ENCODE measurements at regions of chr2 and their contacts with region 1.

Region 1: DNA sequence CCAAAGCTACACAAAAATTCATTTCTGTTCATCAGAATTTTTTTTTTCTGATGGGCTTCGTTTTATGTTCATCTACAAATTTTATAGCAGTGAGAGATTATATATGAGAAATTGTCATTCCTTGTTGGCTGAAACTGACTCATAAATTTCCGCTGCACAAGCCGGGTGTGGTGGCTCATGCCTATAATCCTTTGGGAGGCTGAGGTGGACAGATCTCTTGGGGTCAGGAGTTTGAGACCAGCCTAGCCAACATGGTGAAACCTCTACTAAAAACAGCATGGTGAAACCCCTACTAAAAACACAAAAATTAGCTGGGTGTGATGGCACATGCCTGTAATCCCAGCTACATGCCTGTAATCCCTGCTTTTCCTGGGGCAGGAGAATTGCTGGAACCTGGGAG is 72.0 kb downstream of the PLEKHM3 start:
- DNase-seq: no peak
- H3K4me3 ChIP-seq: no peak overlapping the region
- H3K27ac ChIP-seq: no peak overlapping the region
- H3K27me3 ChIP-seq: no peaks in the 10 kb centered on the region
- CTCF ChIP-seq: no peak

Region 2: DNA sequence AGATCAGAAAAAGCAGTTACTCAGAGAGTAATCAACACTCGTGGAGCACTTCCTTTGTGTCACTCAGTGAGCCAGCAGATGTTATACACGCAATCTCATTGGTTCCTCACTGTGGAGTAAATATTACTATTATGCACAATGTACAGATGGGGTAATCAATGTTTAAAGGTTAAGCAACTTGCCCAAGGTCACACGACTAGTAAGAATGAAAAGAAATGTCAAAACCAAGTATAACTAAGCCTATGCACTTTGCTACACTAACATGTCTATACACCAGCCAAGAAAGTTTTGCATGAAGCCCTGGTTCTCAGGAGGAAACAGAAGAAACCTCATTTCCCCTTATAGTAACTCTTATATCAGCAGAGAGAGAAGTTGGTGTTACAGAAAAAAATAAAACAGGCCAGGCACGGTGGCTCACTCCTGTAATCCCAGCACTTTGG is 333.6 kb before region 1 on chr2:
- CTCF ChIA-PET with region 1: no interaction called
- POLR2A ChIA-PET with region 1: no interaction called
- DNase-seq: no peak
- H3K4me3 ChIP-seq: no peak overlapping the region
- H3K27ac ChIP-seq: no peak overlapping the region
- H3K27me3 ChIP-seq: no peaks in the 10 kb centered on the region
- CTCF ChIP-seq: no peak

Region 3: GRCh38 chr2:207974216-207974605 is 20.9 kb after region 1 on chr2:
- CTCF ChIA-PET with region 1: interaction called, 11 read pairs
- POLR2A ChIA-PET with region 1: no interaction called
- DNase-seq: no peak
- H3K4me3 ChIP-seq: no peak overlapping the region
- H3K27ac ChIP-seq: no peak overlapping the region
- H3K27me3 ChIP-seq: no peaks in the 10 kb centered on the region
- CTCF ChIP-seq: no peak

Measured in AG04450 (cell line).